CD14-positive monocyte (primary cell): ENCODE measurements at regions of chr22 and their contacts with region 1.

Region 1: GRCh38 chr22:30591588-30592359 is at the start of gene PES1:
- DNase-seq: peak; percentile 98 to 100 (median 99)
- H3K4me3 ChIP-seq: peak within 1 kb of the TSS; percentile 44 to 85 (median 84)
- H3K4me3 Mint-ChIP-seq: no peak within 1 kb of the TSS
- H3K27ac ChIP-seq: peak within 1 kb of the TSS; percentile 44 to 93
- H3K27ac Mint-ChIP-seq: no peak within 1 kb of the TSS
- H3K4me1 ChIP-seq: peaks cover 11 to 20% of the 10 kb centered on the region in 2 donors
- H3K4me1 Mint-ChIP-seq: peaks cover 5% of the 10 kb centered on the region
- H3K27me3 ChIP-seq: no peaks in the 10 kb centered on the region
- H3K27me3 Mint-ChIP-seq: peaks cover 7 to 9% (median 8%) of the 10 kb centered on the region in 3 donors
- CTCF ChIP-seq: no peak
- polyA plus RNA-seq, gene PES1: 32.2 to 36.6 (median 35.6) TPM

Region 2: GRCh38 chr22:30606455-30607299 is 14.9 kb after region 1 on chr22 and contains the start of gene TCN2:
- intact Hi-C with region 1: loop called in 1 of 2 experiments (anchors 1 kb)
- DNase-seq: peak; percentile 85 to 92 (median 87)
- H3K4me3 ChIP-seq: peak within 1 kb of the TSS; percentile 43 to 80 (median 48)
- H3K4me3 Mint-ChIP-seq: peak within 1 kb of the TSS; percentile 84 to 93
- H3K27ac ChIP-seq: peak within 1 kb of the TSS; percentile 90 to 97
- H3K27ac Mint-ChIP-seq: peak within 1 kb of the TSS; percentile 95 to 100 (median 99)
- H3K4me1 ChIP-seq: peaks cover 61 to 66% of the 10 kb centered on the region in 2 donors
- H3K4me1 Mint-ChIP-seq: peaks cover 64% of the 10 kb centered on the region
- H3K27me3 ChIP-seq: no peaks in the 10 kb centered on the region
- H3K27me3 Mint-ChIP-seq: no peaks in the 10 kb centered on the region
- CTCF ChIP-seq: no peak
- polyA plus RNA-seq, gene TCN2: 27.1 to 51.7 (median 45.0) TPM

Region 3: DNA sequence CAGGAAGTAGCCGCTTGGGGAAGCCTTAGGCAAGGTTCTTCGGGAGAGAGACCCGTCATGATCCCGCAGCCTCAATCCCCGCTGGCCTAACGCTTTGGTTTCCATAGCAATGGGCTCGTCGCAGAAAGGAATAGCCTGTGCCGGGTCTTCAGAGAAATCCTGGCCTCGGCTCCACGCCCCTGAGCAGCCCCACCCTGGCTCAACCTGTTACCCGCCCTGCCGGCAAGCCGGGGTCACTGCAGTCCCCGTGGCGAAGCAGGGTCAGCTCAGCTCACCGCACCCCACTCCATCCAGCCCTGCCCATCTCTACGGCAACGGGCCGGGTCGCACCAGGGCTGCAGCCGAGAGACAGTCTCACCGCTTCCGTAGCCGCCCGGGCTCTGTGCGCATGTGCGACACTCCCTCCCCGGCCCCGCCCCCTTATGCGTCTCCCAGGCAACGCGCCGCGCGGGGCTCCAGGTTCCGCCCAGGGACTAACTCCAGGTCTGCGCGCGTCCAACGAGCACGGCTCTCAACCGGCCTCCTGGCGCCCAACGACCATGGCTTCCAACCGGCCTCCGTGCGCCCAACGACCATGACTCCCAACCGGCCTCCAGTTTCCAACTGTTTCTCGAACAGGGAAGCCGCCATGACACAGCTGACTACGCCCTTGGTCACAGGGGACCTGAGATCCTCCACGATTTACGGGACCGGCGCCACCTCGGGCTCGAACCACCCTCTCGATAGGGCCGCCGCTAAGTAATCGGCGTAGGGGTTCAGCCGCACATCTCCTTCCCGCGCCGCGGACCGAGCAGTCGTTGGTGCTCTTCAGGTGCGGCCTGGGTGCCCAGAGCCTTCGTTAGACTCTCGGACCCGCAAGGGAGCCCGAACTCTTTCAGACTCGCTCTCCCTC is 76.0 kb after region 1 on chr22 and contains the start of gene DUSP18:
- intact Hi-C with region 1: loop called in 1 of 2 experiments (anchors 5 kb)
- DNase-seq: peak; percentile 90 to 92 (median 90)
- H3K4me3 ChIP-seq: peak within 1 kb of the TSS; percentile 80 to 93 (median 92)
- H3K4me3 Mint-ChIP-seq: peak within 1 kb of the TSS; percentile 91 to 97
- H3K27ac ChIP-seq: peak within 1 kb of the TSS; percentile 43 to 88
- H3K27ac Mint-ChIP-seq: peak within 1 kb of the TSS; percentile 77 to 94 (median 91)
- H3K4me1 ChIP-seq: peaks cover 19 to 26% of the 10 kb centered on the region in 2 donors
- H3K4me1 Mint-ChIP-seq: peaks cover 25% of the 10 kb centered on the region
- H3K27me3 ChIP-seq: peaks cover 6 to 11% of the 10 kb centered on the region in 2 donors
- H3K27me3 Mint-ChIP-seq: peaks cover 12 to 23% (median 17%) of the 10 kb centered on the region in 3 donors
- CTCF ChIP-seq: peak; percentile 65
- polyA plus RNA-seq, gene DUSP18: 13.2 to 34.5 (median 18.9) TPM